Ascending aorta (tissue), 2 donors: ENCODE measurements at regions of chr19 and their contacts with region 1.

Region 1: DNA sequence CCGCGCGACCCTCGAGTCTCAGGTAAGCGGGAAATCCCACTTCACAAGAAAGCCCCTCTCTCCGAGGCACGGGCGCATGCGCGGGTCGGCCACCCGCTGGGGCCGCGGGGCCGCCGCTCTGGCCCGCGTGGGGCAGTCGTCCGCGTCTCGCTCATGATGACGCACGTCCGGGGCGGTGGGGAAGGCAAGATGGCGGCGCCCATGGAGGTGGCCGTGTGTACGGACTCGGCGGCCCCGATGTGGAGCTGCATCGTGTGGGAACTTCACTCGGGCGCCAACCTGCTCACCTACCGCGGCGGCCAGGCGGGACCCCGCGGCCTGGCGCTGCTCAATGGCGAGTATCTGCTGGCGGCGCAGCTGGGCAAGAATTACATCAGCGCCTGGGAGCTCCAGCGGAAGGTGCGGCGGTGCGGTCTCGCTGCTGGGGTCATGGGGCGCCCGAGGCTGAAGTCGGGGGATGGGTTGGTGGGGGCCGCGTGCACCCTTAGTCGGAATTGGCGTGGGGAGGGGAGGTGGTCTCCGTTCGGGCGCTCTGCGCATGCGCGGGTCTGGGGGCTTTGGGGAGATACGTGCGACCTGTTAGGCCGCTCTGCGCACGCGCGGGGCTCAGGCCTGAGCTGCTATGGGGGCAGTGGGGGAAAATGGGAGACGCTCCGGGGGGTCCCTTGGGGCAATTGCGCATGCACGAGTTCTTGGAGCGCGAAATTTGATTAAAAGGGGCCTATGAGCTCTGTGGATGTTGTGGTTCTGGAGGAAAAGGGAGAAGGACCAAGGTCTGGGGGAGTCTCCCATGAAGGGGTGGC is at the start of gene WDR18:
- DNase-seq: peak; percentile 57 to 96
- H3K4me3 ChIP-seq: peak within 1 kb of the TSS; percentile 63 to 73
- H3K27ac ChIP-seq: peak within 1 kb of the TSS; percentile 83 to 84
- H3K4me1 ChIP-seq: peaks cover 12 to 18% of the 10 kb centered on the region in 2 donors
- H3K27me3 ChIP-seq: no peaks in the 10 kb centered on the region
- CTCF ChIP-seq: peak in 2 of 3 experiments; percentile 11 to 27
- total RNA-seq, gene WDR18: 65.7 TPM

Region 2: GRCh38 chr19:680287-681028 is 303.9 kb before region 1 on chr19:
- intact Hi-C with region 1: loop called (anchors 10 kb)
- DNase-seq: peak; percentile 98 to 100
- H3K4me3 ChIP-seq: peak overlapping the region; percentile 88 to 93
- H3K27ac ChIP-seq: peak overlapping the region; percentile 97 to 98
- H3K4me1 ChIP-seq: peaks cover 9 to 21% of the 10 kb centered on the region in 2 donors
- H3K27me3 ChIP-seq: no peaks in the 10 kb centered on the region
- CTCF ChIP-seq: peak; percentile 21 to 76 (median 35)

Region 3: DNA sequence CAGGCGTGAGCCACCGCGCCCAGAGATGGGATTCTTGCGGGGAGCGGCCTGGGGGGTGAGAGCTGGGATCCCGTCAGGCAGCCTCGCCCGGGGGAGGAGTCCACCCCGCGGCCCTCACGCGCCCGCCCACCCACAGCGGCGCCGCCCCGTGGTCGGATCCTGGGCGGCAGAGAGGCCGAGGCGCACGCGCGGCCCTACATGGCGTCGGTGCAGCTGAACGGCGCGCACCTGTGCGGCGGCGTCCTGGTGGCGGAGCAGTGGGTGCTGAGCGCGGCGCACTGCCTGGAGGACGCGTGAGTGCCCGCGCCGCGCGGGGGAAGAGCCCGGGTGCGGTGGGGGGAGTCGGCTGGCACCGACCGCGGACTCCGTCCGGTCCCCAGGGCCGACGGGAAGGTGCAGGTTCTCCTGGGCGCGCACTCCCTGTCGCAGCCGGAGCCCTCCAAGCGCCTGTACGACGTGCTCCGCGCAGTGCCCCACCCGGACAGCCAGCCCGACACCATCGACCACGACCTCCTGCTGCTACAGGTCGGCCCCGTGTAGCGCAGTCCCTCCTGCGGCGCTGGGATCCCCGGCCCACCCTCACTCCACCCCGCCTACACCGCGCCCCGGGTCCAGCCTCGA is 123.8 kb before region 1 on chr19:
- intact Hi-C with region 1: loop called (anchors 5 kb)
- DNase-seq: no peak
- H3K4me3 ChIP-seq: peak overlapping the region; percentile 27 to 52
- H3K27ac ChIP-seq: no peak overlapping the region
- H3K4me1 ChIP-seq: peaks cover 0 to 11% of the 10 kb centered on the region in 2 donors
- H3K27me3 ChIP-seq: peaks cover 24% of the 10 kb centered on the region
- CTCF ChIP-seq: peak in 1 of 3 experiments; percentile 14

Region 4: GRCh38 chr19:925526-926322 is 58.6 kb before region 1 on chr19 and contains the start of gene ARID3A:
- intact Hi-C with region 1: loop called (anchors 1 kb)
- DNase-seq: peak in 1 of 2 donors; percentile 88
- H3K4me3 ChIP-seq: peak within 1 kb of the TSS; percentile 95 to 98
- H3K27ac ChIP-seq: peak within 1 kb of the TSS; percentile 59 to 71
- H3K4me1 ChIP-seq: peaks cover 5 to 16% of the 10 kb centered on the region in 2 donors
- H3K27me3 ChIP-seq: no peaks in the 10 kb centered on the region
- CTCF ChIP-seq: no peak
- total RNA-seq, gene ARID3A: 55.3 TPM

Region 5: DNA sequence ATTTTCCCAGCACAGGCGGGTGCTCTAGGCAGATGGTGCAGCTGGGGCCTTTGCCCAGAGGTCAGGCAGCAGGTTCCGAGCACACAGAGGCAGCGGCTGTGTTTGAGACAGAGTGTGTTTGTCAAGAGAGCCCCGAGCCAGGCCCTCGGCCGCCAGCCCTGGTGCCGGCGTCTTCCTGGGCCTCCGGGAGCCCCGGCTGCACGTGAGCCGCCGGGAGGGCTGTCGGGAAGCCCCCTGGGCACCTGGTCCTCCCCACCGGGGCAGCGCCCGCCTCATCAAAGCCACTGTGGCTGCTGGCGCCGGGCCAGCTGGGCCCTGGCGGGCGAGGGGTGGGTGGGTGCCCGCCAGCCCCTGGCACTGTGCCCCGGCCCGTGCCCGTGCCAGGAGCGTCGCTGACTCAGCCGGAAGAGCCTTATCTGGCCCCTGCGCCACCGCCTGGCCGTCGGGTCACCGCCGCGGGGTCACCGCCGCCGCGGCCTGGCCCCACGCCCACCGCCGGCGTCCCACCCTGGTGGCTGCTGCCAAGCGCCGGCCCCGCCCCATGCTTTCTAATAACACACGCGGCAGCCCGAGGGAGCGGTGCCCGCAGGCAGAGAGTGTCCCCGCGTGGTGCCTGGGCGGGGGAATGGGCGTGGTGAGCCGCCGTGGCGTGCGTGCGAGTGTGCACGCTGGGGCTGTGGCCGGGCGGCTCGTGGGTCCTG is 43.6 kb before region 1 on chr19:
- intact Hi-C with region 1: loop called (anchors 5 kb)
- DNase-seq: peak; percentile 63 to 90
- H3K4me3 ChIP-seq: peak overlapping the region; percentile 48 to 58
- H3K27ac ChIP-seq: peak overlapping the region; percentile 88
- H3K4me1 ChIP-seq: peaks cover 0 to 15% of the 10 kb centered on the region in 2 donors
- H3K27me3 ChIP-seq: no peaks in the 10 kb centered on the region
- CTCF ChIP-seq: no peak

Region 6: GRCh38 chr19:958967-959820 is 25.2 kb before region 1 on chr19:
- intact Hi-C with region 1: no loop called
- DNase-seq: no peak
- H3K4me3 ChIP-seq: no peak overlapping the region
- H3K27ac ChIP-seq: no peak overlapping the region
- H3K4me1 ChIP-seq: no peaks in the 10 kb centered on the region
- H3K27me3 ChIP-seq: no peaks in the 10 kb centered on the region
- CTCF ChIP-seq: no peak

Region 7: GRCh38 chr19:1020868-1021425 is 36.6 kb after region 1 on chr19 and contains the start of gene TMEM259:
- intact Hi-C with region 1: loop called (anchors 1 kb)
- DNase-seq: peak; percentile 87 to 98
- H3K4me3 ChIP-seq: peak within 1 kb of the TSS; percentile 93 to 94
- H3K27ac ChIP-seq: peak within 1 kb of the TSS; percentile 93 to 95
- H3K4me1 ChIP-seq: peaks cover 39 to 50% of the 10 kb centered on the region in 2 donors
- H3K27me3 ChIP-seq: no peaks in the 10 kb centered on the region
- CTCF ChIP-seq: no peak
- total RNA-seq, gene TMEM259: 452 TPM